ENCODE measurements at regions of chr2 and their contacts with region 1.

Region 1: DNA sequence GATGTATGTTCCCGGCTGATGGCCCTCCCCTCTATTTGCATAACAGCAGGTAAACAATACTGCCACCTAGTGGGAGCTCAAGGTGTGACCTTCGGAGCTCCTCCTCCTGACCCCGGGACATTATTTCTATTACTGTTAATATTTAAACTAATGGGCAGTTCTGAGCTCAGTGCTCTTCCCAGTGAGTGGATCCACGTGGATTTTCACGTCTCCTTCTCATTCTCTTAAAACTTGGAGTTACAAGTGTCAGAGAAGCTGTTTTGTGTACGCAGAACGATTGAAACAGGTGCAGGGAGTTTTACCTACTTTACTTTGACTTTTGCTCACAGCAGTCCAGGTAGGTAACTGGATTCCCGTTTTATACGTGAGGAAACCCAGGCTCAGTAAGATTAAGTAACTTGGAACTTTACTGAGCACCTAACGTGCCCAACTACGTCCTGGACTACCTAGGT is 127.3 kb downstream of the PRKCE start:
- DNase-seq: peak; percentile 89
- ATAC-seq: peak; percentile 92
- H3K4me3 ChIP-seq: no peak overlapping the region
- H3K27ac ChIP-seq: no peak overlapping the region
- H3K4me1 ChIP-seq: no peaks in the 10 kb centered on the region
- H3K27me3 ChIP-seq: no peaks in the 10 kb centered on the region
- CTCF ChIP-seq: peak; percentile 83

Region 2: GRCh38 chr2:45585267-45585861 is 193.4 kb before region 1 on chr2:
- CTCF ChIA-PET with region 1: no interaction called
- POLR2A ChIA-PET with region 1: no interaction called
- intact Hi-C with region 1: loop called (anchors 1 kb)
- DNase-seq: peak; percentile 72
- ATAC-seq: peak; percentile 74
- H3K4me3 ChIP-seq: no peak overlapping the region
- H3K27ac ChIP-seq: no peak overlapping the region
- H3K4me1 ChIP-seq: no peaks in the 10 kb centered on the region
- H3K27me3 ChIP-seq: no peaks in the 10 kb centered on the region
- CTCF ChIP-seq: peak; percentile 83

Region 3: DNA sequence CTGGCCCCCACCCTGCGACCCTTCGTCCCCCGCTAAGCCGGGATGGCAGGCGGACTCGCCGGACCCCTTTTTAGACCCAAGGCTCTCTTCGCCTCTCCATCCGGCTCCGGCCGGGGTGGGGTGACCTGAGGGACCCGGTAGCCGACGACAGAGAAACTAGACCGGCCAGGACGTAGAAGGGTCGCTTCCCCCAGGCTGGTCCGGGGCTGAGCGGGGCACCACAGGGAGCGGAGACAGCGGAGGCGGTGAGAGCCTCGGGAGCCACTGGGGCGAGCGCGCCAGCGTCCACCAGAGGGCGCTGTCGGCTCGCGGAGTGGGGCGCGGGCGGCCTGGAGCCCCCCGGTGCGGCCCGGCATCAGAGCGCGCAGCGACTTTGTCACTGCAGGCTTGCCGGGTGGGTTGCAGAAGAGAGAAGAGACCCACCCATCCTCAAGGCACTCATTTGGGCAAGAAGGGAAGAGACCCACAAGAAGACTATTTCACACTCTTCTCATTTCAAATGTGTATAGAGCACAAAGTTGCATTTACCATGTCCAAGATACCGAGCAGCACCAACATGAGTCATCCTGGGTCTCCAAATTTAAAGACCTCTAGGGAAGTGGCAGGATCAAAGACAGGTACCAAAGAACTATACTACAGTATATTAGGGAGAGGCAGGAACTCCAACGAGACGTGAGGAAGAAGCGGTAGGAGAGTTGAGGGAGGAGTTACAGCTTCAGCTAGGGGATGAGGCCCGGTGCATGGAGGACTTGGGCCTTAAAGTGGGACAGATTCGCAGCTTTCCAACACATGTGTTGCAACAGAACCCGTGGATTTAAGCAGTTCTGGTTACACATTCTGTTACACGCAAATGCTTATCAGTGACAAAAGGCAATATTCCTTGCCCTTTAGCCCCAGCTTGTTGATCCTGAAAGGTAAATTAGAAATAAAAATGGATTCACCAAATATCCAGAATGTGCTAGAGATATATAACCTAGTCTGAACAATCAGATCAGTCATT is 134.9 kb before region 1 on chr2:
- CTCF ChIA-PET with region 1: interaction called, 3 read pairs
- POLR2A ChIA-PET with region 1: no interaction called
- intact Hi-C with region 1: loop called (anchors 1 kb)
- DNase-seq: peak; percentile 84
- ATAC-seq: peak; percentile 99
- H3K4me3 ChIP-seq: peak overlapping the region; percentile 80
- H3K27ac ChIP-seq: no peak overlapping the region
- H3K4me1 ChIP-seq: 0 out of 2 replicates have a peak, but pooled peaks cover 4% of the 10 kb centered on the region
- H3K27me3 ChIP-seq: no peaks in the 10 kb centered on the region
- CTCF ChIP-seq: peak; percentile 95

Region 4: GRCh38 chr2:45929674-45930395 is 151.1 kb after region 1 on chr2:
- CTCF ChIA-PET with region 1: no interaction called
- POLR2A ChIA-PET with region 1: interaction called, 11 read pairs
- intact Hi-C with region 1: no loop called
- DNase-seq: no peak
- ATAC-seq: no peak
- H3K4me3 ChIP-seq: no peak overlapping the region
- H3K27ac ChIP-seq: no peak overlapping the region
- H3K4me1 ChIP-seq: peaks cover 6% of the 10 kb centered on the region
- H3K27me3 ChIP-seq: no peaks in the 10 kb centered on the region
- CTCF ChIP-seq: no peak